Common myeloid progenitor, CD34-positive (primary cell): ENCODE measurements at regions of chr12 and their contacts with region 1.

Region 1: DNA sequence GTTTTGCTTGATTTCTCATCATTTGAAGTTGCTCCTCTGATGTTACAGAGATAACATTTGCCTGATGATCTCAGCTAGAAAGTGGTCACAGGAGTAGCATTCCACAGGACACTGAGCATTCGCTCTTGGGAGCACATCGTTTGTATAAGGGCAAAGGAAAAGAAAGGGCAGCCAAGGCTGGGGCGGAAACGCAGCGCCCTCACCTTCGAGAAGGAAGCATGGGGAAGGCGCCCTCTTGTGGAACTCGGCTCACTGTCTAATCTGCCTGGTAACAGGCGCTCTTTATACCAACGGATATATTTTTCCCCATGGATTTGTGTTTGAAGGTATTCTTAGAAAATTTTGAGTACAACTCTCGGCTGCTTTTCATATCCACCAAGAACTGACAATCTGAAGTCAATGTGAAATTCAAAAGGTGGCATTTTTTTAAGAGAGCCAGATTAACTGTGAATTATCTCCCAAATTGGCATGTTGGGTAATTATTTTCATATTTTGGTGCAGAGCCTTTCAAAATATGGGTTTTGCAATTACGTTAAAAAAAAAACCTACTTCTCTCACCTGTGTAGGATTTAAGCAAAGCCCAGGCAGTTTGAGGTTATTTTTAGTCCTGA is 172.7 kb downstream of the CAND1 start:
- DNase-seq: peak; percentile 59 to 78 (median 76)
- H3K4me3 ChIP-seq: no peak overlapping the region
- H3K27ac ChIP-seq: no peak overlapping the region
- H3K4me1 ChIP-seq: peaks cover 2 to 20% (median 4%) of the 10 kb centered on the region in 4 experiments
- H3K27me3 ChIP-seq: no peaks in the 10 kb centered on the region

Region 2: DNA sequence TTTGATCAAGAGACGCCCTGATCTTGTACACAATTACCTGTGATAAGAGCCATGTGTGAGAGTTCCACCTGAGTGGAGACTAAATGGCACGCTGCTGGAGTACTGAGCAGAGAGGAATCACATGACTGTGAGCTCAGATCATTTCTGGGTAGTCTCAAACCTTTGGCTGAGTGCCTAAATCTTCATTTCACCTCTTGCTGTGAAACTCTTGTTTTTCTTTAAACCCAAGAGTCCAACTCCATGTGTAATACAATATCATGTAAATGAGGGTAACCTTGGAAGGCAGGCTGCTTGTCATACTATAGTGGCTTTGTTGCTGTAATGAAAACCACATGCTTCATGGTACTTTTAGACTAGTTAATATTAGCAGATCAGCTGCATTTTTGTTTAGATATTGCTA is 15.8 kb before region 1 on chr12:
- CTCF ChIA-PET with region 1: interaction called, 10 read pairs
- POLR2A ChIA-PET with region 1: no interaction called
- DNase-seq: no peak
- H3K4me3 ChIP-seq: no peak overlapping the region
- H3K27ac ChIP-seq: no peak overlapping the region
- H3K4me1 ChIP-seq: peaks cover 0 to 9% (median 3%) of the 10 kb centered on the region in 4 experiments
- H3K27me3 ChIP-seq: no peaks in the 10 kb centered on the region